ENCODE measurements at regions of chr3 and their contacts with region 1.

Region 1: DNA sequence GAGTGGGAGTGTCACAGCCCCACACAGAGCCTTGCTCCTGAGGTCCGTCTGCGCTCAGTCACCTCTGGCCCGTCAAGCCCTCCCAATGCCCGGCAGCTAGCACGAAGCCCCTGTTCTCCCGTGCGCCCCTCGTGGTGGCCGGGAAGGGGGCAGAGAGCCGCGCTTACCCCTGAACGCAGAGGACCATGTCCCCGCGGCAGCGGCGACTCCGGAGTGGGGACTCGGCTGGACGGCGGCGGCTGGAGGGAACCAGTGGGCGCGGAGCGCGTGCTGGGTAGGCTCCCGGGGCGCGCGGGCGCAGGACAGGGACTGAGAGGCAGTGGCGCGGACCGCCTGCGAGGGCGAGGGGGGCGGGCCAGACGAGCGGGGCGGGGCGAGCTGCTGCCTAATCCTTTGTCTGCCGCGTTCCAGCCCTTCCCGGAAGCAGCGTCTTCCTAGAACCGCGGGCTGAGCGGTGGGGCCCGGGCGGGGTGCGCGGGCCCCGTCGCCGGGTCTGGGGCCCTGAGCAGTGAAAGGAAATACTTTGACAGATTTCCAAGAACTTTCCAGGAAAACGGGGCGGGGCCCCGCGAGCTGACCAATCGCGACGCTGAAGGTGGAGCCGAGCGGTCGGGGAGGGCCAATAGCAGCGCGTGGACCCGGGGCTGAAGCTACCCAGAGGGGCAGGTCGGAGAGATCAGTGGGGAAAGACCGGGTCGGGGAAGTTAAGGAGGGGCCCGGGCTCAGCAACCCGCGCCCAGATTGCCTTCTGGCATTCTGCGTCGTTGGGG is at the start of gene CISH:
- DNase-seq: peak; percentile 76 to 93 (median 86)
- ATAC-seq: peak; percentile 67 to 75 (median 70)
- H3K4me3 ChIP-seq: peak within 1 kb of the TSS; percentile 82 to 93
- H3K4me3 Mint-ChIP-seq: peak within 1 kb of the TSS; percentile 80 to 96 (median 93)
- H3K27ac ChIP-seq: peak within 1 kb of the TSS; percentile 65
- H3K27ac Mint-ChIP-seq: peak within 1 kb of the TSS; percentile 99 to 100
- H3K4me1 ChIP-seq: peaks cover 45 to 90% of the 10 kb centered on the region in 2 experiments
- H3K4me1 Mint-ChIP-seq: peaks cover 72 to 79% (median 76%) of the 10 kb centered on the region in 3 donors
- H3K27me3 ChIP-seq: no peaks in the 10 kb centered on the region
- H3K27me3 Mint-ChIP-seq: no peaks in the 10 kb centered on the region
- total RNA-seq, gene CISH: 37.4 to 217 (median 190) TPM

Region 2: GRCh38 chr3:50568947-50569749 is 42.5 kb before region 1 on chr3 and contains the start of gene HEMK1:
- CTCF ChIA-PET with region 1: interaction called, 96 to 139 read pairs
- POLR2A ChIA-PET with region 1: interaction called in 1 of 2 experiments, 5 read pairs
- DNase-seq: peak; percentile 74 to 94 (median 86)
- ATAC-seq: peak; percentile 58 to 69 (median 64)
- H3K4me3 ChIP-seq: peak within 1 kb of the TSS; percentile 90 to 95
- H3K4me3 Mint-ChIP-seq: peak within 1 kb of the TSS; percentile 84 to 93 (median 90)
- H3K27ac ChIP-seq: peak within 1 kb of the TSS; percentile 88
- H3K27ac Mint-ChIP-seq: peak within 1 kb of the TSS; percentile 97 to 98
- H3K4me1 ChIP-seq: peaks cover 34 to 74% of the 10 kb centered on the region in 2 experiments
- H3K4me1 Mint-ChIP-seq: peaks cover 62 to 76% (median 69%) of the 10 kb centered on the region in 3 donors
- H3K27me3 ChIP-seq: no peaks in the 10 kb centered on the region
- H3K27me3 Mint-ChIP-seq: no peaks in the 10 kb centered on the region
- total RNA-seq, gene HEMK1: 35.5 to 66.6 (median 42.0) TPM

Region 3: GRCh38 chr3:50587806-50588758 is 23.6 kb before region 1 on chr3:
- CTCF ChIA-PET with region 1: interaction called, 7 to 36 read pairs
- POLR2A ChIA-PET with region 1: interaction called, 4 to 7 read pairs
- DNase-seq: peak in 19 of 35 experiments; percentile 29 to 70 (median 49)
- ATAC-seq: peak; percentile 18 to 59 (median 36)
- H3K4me3 ChIP-seq: no peak overlapping the region
- H3K4me3 Mint-ChIP-seq: peak overlapping the region; percentile 13 to 69 (median 34)
- H3K27ac ChIP-seq: peak overlapping the region; percentile 59
- H3K27ac Mint-ChIP-seq: peak overlapping the region; percentile 88 to 93
- H3K4me1 ChIP-seq: peaks cover 21 to 83% of the 10 kb centered on the region in 2 experiments
- H3K4me1 Mint-ChIP-seq: peaks cover 52 to 76% (median 75%) of the 10 kb centered on the region in 3 donors
- H3K27me3 ChIP-seq: no peaks in the 10 kb centered on the region
- H3K27me3 Mint-ChIP-seq: no peaks in the 10 kb centered on the region

Region 4: DNA sequence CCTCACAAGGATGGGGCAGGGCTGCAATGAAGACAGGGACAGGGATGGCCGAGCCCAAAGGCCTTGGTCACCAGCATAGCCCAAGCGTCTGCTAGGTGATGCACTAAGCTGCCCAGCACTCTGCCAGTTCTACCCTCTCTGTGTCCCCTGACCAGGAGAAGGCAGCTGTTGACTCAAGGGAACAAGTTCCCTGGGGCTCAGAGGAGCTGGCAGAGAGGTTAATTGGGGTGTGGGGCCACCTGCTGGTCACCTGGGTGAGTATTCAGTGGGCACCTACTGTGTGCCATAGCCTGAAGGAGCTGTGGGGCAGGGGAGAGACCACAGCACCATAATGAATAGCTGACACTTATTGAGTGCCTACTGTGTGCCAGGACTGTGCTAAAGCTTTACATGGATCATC is 41.1 kb after region 1 on chr3:
- CTCF ChIA-PET with region 1: interaction called, 9 to 33 read pairs
- POLR2A ChIA-PET with region 1: no interaction called
- DNase-seq: peak in 28 of 35 experiments; percentile 11 to 65 (median 34)
- ATAC-seq: peak; percentile 64 to 84 (median 75)
- H3K4me3 ChIP-seq: no peak overlapping the region
- H3K4me3 Mint-ChIP-seq: no peak overlapping the region
- H3K27ac ChIP-seq: no peak overlapping the region
- H3K27ac Mint-ChIP-seq: peak overlapping the region in 1 of 2 donors; percentile 45
- H3K4me1 ChIP-seq: peaks cover 0 to 4% of the 10 kb centered on the region in 2 experiments
- H3K4me1 Mint-ChIP-seq: peaks cover 0 to 11% (median 7%) of the 10 kb centered on the region in 3 donors
- H3K27me3 ChIP-seq: no peaks in the 10 kb centered on the region
- H3K27me3 Mint-ChIP-seq: no peaks in the 10 kb centered on the region

Region 5: DNA sequence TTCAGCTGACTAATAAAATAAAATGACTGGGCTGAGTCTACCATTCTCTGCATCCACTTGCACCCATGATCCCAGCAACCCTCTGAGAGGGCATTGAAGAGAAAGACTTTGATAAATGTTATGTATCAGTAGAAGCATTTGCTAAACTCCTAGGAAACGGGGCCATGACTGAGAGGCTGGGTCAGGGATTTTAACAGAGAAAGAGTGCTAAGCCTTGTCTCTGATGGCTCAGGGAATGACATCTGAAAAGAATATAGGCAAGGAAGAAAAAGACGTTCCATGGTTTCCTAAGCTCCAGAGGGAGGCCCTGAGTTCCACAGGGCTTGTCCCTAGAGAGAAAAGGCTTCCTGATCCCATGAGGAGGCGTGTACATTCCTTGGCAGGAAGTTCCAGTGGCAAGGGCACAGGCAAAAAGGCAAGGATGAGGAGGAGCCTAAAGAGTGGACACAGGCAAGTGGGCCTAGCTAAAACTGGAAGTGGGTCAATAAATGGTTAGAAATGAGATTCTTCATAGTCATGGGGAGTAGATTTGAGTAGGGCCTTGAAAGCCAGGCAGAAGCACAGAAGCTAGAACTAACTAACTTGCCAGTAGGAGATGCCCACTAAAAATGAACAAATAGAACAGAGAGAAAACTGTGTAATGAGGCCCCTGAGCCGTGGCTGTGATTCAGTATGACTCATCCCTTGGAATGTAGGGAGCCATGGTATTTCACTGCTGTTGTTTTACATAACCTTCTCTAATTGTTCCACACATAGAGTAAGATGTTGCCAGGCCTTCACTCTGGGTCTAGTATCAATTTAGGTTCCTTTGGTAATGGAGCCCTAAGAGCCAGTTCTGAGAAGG is 728.6 kb after region 1 on chr3:
- CTCF ChIA-PET with region 1: no interaction called
- POLR2A ChIA-PET with region 1: no interaction called
- DNase-seq: no peak
- ATAC-seq: no peak
- H3K4me3 ChIP-seq: no peak overlapping the region
- H3K4me3 Mint-ChIP-seq: no peak overlapping the region
- H3K27ac ChIP-seq: no peak overlapping the region
- H3K27ac Mint-ChIP-seq: no peak overlapping the region
- H3K4me1 ChIP-seq: no peaks in the 10 kb centered on the region
- H3K4me1 Mint-ChIP-seq: no peaks in the 10 kb centered on the region
- H3K27me3 ChIP-seq: no peaks in the 10 kb centered on the region
- H3K27me3 Mint-ChIP-seq: peaks cover 0 to 1% of the 10 kb centered on the region in 2 donors

Region 6: GRCh38 chr3:51384726-51385473 is 773.3 kb after region 1 on chr3 and contains the start of gene MANF:
- CTCF ChIA-PET with region 1: interaction called, 3 to 17 read pairs
- POLR2A ChIA-PET with region 1: no interaction called
- DNase-seq: peak; percentile 90 to 99 (median 97)
- ATAC-seq: peak; percentile 95 to 97 (median 96)
- H3K4me3 ChIP-seq: peak within 1 kb of the TSS; percentile 93 to 96
- H3K4me3 Mint-ChIP-seq: peak within 1 kb of the TSS; percentile 98 to 99 (median 99)
- H3K27ac ChIP-seq: peak within 1 kb of the TSS; percentile 88
- H3K27ac Mint-ChIP-seq: peak within 1 kb of the TSS; percentile 99
- H3K4me1 ChIP-seq: peaks cover 20 to 46% of the 10 kb centered on the region in 2 experiments
- H3K4me1 Mint-ChIP-seq: peaks cover 47 to 56% (median 49%) of the 10 kb centered on the region in 3 donors
- H3K27me3 ChIP-seq: no peaks in the 10 kb centered on the region
- H3K27me3 Mint-ChIP-seq: no peaks in the 10 kb centered on the region
- total RNA-seq, gene MANF: 36.4 to 71.9 (median 56.7) TPM

Region 7: DNA sequence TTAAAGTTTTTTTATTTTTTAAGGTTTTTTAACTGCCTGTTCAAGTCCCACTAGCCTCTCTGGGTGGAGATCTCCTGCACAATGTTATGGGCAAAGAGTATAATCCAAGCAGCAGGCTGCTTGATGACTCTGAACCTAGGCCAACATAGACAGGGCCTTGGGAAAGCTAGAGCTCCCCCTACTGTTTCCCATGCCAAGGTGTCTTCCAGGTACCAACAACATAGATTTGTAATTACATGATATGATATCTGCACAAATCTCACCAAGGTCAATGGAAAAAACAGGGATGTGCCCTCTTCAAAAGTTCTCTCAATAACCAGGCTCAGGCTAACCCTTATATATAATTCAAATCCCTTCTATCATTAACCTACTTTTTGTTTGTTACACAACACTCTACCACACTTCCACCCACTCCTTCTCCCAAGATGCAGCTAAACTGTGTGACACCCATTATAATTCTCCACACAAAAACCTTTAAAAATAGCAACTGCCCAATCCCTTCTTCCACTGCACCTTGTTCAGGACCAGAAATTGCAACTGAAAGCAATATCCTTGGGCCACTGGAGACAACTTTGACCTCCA is 823.2 kb after region 1 on chr3:
- CTCF ChIA-PET with region 1: interaction called, 3 to 10 read pairs
- POLR2A ChIA-PET with region 1: no interaction called
- DNase-seq: peak in 32 of 35 experiments; percentile 6 to 75 (median 30)
- ATAC-seq: peak; percentile 75 to 96 (median 90)
- H3K4me3 ChIP-seq: no peak overlapping the region
- H3K4me3 Mint-ChIP-seq: no peak overlapping the region
- H3K27ac ChIP-seq: no peak overlapping the region
- H3K27ac Mint-ChIP-seq: peak overlapping the region in 1 of 2 donors; percentile 53
- H3K4me1 ChIP-seq: no peaks in the 10 kb centered on the region
- H3K4me1 Mint-ChIP-seq: peaks cover 7 to 9% (median 7%) of the 10 kb centered on the region in 3 donors
- H3K27me3 ChIP-seq: no peaks in the 10 kb centered on the region
- H3K27me3 Mint-ChIP-seq: no peaks in the 10 kb centered on the region